Common myeloid progenitor, CD34-positive (primary cell): ENCODE measurements at regions of chr18 and their contacts with region 1.

Region 1: DNA sequence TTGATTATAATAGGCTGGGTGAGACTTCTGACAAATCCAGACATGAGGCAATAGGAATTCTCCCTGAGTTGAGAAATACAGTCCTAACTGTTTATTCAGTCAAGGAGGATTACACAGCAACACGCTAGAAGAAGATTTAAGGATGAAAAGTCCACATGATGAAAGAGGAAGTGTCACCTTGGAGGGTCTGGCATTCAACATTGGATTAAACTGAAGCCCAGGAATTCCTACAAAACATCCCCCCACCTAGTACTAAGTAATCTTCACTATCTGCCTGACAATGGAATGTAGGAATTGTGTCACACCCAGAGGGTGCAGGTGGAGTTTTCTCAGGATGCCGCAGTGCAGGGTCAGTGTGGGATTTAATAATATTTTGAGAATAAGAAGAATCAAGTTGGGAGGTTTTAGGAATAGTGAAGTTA is 142.4 kb downstream of the SOCS6 start:
- DNase-seq: no peak
- H3K4me3 ChIP-seq: no peak overlapping the region
- H3K27ac ChIP-seq: no peak overlapping the region
- H3K4me1 ChIP-seq: peaks cover 0 to 4% (median 0%) of the 10 kb centered on the region in 4 experiments
- H3K27me3 ChIP-seq: no peaks in the 10 kb centered on the region

Region 2: DNA sequence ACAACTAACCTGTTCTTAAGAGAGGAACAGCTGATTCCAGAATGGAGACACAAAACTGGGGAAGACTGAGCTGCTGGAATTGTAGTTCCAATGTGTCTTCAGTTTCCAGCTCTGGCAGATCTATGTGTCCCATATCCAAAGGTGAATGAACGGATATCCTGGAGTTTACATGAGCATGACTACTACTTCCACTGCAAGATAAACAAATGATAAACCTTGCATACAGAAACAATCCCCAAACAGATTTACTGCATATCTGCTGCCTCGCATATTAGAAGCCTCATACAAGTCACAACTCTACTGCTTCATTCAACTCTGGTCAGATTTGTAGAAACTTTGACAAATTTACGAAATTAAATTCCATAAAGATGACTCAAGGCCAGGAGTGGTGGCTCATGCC is 240.7 kb before region 1 on chr18:
- CTCF ChIA-PET with region 1: interaction called, 118 read pairs
- POLR2A ChIA-PET with region 1: no interaction called
- DNase-seq: no peak
- H3K4me3 ChIP-seq: no peak overlapping the region
- H3K27ac ChIP-seq: no peak overlapping the region
- H3K4me1 ChIP-seq: no peaks in the 10 kb centered on the region
- H3K27me3 ChIP-seq: no peaks in the 10 kb centered on the region

Region 3: DNA sequence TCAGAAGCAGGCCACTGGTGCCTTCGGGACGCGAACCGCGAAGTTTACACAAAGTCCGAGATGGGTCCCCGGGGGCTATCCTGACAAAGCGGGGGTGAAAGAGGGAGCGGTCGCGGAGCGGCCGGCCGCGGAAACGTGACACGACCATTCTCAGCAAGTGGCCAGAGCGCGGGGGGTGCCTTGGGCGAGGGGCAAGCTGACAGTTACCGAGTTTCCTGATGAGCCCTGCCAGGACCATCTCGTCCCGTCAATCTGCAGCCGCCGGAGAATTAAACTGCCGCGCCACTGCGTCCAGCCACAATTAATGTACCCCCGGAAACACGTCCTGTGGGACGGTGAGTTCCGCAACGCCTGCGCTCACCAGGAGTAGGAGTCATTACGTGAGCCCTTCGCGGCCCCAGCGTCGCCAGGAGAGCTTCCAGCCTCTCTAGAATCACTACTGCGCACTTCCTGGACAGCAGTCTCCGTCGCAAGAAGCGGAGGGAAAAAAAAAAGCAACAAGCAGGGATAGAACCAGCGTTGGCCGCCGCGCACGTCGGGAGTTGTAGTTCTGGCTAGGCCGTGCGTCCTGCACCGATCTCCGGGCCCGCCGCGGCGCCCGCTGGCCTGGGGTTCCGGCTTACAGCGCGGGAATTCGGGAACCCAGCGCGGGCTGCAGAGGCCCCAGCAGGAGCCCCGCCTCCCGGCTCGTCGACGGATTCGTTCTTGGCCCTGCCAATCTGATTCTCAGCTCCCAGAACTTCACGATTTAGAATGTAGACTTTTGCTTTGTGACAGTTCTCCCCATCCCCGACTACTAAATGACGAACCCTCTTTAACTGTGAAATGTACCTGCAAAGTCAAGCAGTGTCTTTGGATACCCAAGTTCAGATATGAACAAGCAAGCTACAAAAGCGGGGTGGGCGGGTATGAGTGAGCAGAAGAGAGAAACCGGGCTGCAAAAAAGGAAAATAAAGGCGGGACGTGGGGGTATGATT is 225.5 kb before region 1 on chr18 and contains the start of gene RTTN:
- CTCF ChIA-PET with region 1: interaction called, 118 read pairs
- POLR2A ChIA-PET with region 1: no interaction called
- DNase-seq: peak; percentile 96 to 98 (median 97)
- H3K4me3 ChIP-seq: peak within 1 kb of the TSS; percentile 82 to 98 (median 92)
- H3K27ac ChIP-seq: peak within 1 kb of the TSS; percentile 93 to 94
- H3K4me1 ChIP-seq: peaks cover 2 to 18% (median 10%) of the 10 kb centered on the region in 4 experiments
- H3K27me3 ChIP-seq: no peaks in the 10 kb centered on the region

Region 4: GRCh38 chr18:70454704-70455322 is 23.6 kb after region 1 on chr18:
- CTCF ChIA-PET with region 1: interaction called, 15 read pairs
- POLR2A ChIA-PET with region 1: no interaction called
- DNase-seq: peak; percentile 60 to 82 (median 74)
- H3K4me3 ChIP-seq: no peak overlapping the region
- H3K27ac ChIP-seq: no peak overlapping the region
- H3K4me1 ChIP-seq: peaks cover 0 to 8% (median 0%) of the 10 kb centered on the region in 4 experiments
- H3K27me3 ChIP-seq: no peaks in the 10 kb centered on the region